ENCODE measurements at regions of chr1 and their contacts with region 1.

Region 1: DNA sequence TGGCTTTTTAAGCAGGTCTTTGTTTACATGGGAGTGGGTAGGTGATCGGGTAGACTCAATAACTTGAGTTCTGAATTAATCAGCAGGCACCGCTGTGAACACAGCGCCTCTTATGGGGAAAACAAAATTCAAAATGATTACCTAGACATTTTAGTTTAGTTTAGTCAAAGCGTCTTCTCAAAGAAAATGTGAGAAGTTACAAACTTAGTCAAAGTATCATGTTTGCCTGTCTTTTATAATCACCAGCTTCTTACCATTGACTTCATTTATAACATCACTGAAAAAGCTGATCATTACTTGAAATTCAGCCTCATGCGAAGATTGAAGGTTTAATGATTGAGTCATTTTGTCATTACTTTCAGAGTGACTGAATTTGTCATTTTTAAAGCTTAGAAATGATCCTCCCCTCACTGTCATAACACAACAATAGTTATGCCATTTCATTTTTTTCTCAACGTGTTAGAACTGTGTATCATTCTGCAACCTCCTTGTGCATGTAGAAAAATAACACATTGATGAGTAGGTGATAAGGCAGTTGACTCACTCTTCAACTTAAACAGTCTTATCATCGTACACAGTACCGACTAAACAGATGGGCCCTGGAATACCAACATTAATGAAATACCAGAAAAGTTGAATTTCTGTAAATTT is 188.5 kb downstream of the NFIA start:
- DNase-seq: no peak
- ATAC-seq: no peak
- H3K4me3 ChIP-seq: no peak overlapping the region
- H3K27ac ChIP-seq: no peak overlapping the region
- H3K4me1 ChIP-seq: peaks cover 19% of the 10 kb centered on the region
- H3K27me3 ChIP-seq: no peaks in the 10 kb centered on the region
- CTCF ChIP-seq: no peak

Region 2: DNA sequence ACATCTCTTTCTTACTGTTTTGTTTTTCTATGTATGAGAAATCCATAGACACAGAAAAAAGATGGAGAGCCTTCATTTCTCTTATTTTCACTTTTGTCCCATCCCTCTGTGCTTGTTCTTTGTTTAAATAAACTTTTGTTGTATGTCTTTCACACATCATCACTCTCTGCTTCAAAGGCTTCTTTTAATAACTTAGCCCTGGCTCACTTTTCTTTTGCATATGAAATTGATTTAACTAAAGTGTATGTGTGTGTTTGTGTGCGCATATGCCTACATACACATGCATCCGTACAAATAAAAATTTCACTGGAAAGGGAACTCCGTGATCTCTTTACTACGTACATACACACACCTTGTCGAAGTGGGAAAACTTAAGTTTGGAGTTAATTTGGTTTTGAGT is 20.0 kb before region 1 on chr1:
- intact Hi-C with region 1: loop called in 1 of 2 experiments (anchors 2 kb)
- DNase-seq: no peak
- ATAC-seq: no peak
- H3K4me3 ChIP-seq: no peak overlapping the region
- H3K27ac ChIP-seq: no peak overlapping the region
- H3K4me1 ChIP-seq: peaks cover 50% of the 10 kb centered on the region
- H3K27me3 ChIP-seq: no peaks in the 10 kb centered on the region
- CTCF ChIP-seq: no peak

Region 3: GRCh38 chr1:61259390-61260148 is 11.3 kb before region 1 on chr1:
- intact Hi-C with region 1: loop called in 1 of 2 experiments (anchors 2 kb)
- DNase-seq: no peak
- ATAC-seq: peak; percentile 45 to 77 (median 62)
- H3K4me3 ChIP-seq: no peak overlapping the region
- H3K27ac ChIP-seq: peak overlapping the region; percentile 65
- H3K4me1 ChIP-seq: peaks cover 27% of the 10 kb centered on the region
- H3K27me3 ChIP-seq: no peaks in the 10 kb centered on the region
- CTCF ChIP-seq: no peak

Region 4: GRCh38 chr1:61313906-61314422 is 43.1 kb after region 1 on chr1:
- intact Hi-C with region 1: loop called in 1 of 2 experiments (anchors 5 kb)
- DNase-seq: no peak
- ATAC-seq: no peak
- H3K4me3 ChIP-seq: no peak overlapping the region
- H3K27ac ChIP-seq: no peak overlapping the region
- H3K4me1 ChIP-seq: peaks cover 20% of the 10 kb centered on the region
- H3K27me3 ChIP-seq: no peaks in the 10 kb centered on the region
- CTCF ChIP-seq: no peak